ENCODE measurements at regions of chr22 and their contacts with region 1.

Region 1: GRCh38 chr22:46006379-46007002 is 29.5 kb upstream of the WNT7B start:
- DNase-seq: peak; percentile 97
- ATAC-seq: peak; percentile 67

Region 2: GRCh38 chr22:45889305-45890093 is 117.0 kb before region 1 on chr22:
- intact Hi-C with region 1: no loop called
- DNase-seq: peak; percentile 26
- ATAC-seq: no peak

Region 3: GRCh38 chr22:46116491-46116958 is 110.0 kb after region 1 on chr22:
- intact Hi-C with region 1: loop called (anchors 5 kb)
- DNase-seq: peak; percentile 98
- ATAC-seq: peak; percentile 73

Measured in left ventricle myocardium superior (tissue), 1 donor.